Heart left ventricle (tissue), 16 donors: ENCODE measurements at regions of chr11 and their contacts with region 1.

Region 1: GRCh38 chr11:4496557-4497275 is 14.3 kb downstream of the OR52K1 start:
- DNase-seq: no peak
- ATAC-seq: no peak
- H3K4me3 ChIP-seq: no peak overlapping the region
- H3K27ac ChIP-seq: no peak overlapping the region
- H3K4me1 ChIP-seq: peaks cover 0 to 8% (median 0%) of the 10 kb centered on the region in 12 donors
- H3K27me3 ChIP-seq: peaks cover 0 to 18% (median 0%) of the 10 kb centered on the region in 9 donors
- CTCF ChIP-seq: no peak
- POLR2A ChIP-seq: no peak

Region 2: DNA sequence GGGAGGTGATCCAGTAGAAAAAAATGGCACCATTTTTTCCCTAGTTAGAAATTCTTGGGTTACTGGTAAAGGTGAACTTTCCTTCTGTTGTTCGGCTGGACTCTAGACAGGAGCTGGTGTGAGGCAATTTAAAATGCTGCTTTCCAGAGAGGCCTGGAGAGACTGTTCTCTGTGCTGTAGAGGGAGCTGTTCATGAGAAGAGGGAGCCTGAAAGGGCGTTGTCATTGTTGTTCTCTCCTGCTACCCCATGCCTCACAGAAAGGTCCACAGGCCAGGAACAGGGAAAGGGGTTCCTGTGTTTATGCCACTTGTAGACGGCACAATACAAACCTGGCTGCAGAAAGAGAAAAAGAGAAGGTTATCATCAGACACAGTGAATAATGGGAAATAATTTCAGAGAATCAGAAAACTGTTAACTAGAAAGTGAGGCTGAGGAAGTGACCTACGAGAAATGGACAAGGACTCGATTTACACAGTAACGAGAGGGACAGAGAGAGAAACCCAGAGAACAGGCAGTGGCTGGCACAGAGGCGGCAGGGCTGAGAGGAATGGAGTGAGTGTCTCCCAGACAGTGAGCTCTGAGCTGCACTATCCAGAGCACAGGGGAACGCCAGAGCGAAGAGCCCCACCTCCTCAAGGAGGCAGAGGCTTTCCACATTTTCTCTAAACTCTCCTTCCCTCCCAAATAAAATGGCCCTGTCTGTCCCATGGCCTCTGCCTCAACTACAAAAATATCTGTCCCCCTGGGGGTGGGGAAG is 292.9 kb before region 1 on chr11:
- intact Hi-C with region 1: loop called in 2 of 10 experiments (anchors 5 kb)
- DNase-seq: no peak
- ATAC-seq: peak; percentile 83 to 93 (median 90)
- H3K4me3 ChIP-seq: no peak overlapping the region
- H3K27ac ChIP-seq: peak overlapping the region in 7 of 12 donors; percentile 24 to 63 (median 40)
- H3K4me1 ChIP-seq: peaks cover 0 to 18% (median 1%) of the 10 kb centered on the region in 12 donors
- H3K27me3 ChIP-seq: peaks cover 0 to 5% (median 0%) of the 10 kb centered on the region in 9 donors
- CTCF ChIP-seq: peak in 7 of 12 donors; percentile 15 to 39 (median 28)
- POLR2A ChIP-seq: no peak

Region 3: GRCh38 chr11:4393209-4393857 is 103.4 kb before region 1 on chr11 and contains the start of gene TRIM21:
- intact Hi-C with region 1: loop called in 1 of 10 experiments (anchors 10 kb)
- DNase-seq: peak; percentile 81 to 87 (median 84)
- ATAC-seq: peak; percentile 94 to 100 (median 100)
- H3K4me3 ChIP-seq: peak within 1 kb of the TSS; percentile 57 to 99 (median 87)
- H3K27ac ChIP-seq: peak within 1 kb of the TSS in 11 of 12 donors; percentile 69 to 95 (median 83)
- H3K4me1 ChIP-seq: peaks cover 0 to 29% (median 5%) of the 10 kb centered on the region in 12 donors
- H3K27me3 ChIP-seq: peaks cover 0 to 7% (median 0%) of the 10 kb centered on the region in 9 donors
- CTCF ChIP-seq: no peak
- POLR2A ChIP-seq: peak in 1 of 2 donors; percentile 69
- total RNA-seq, gene TRIM21: 7.1 to 36.0 (median 8.5) TPM

Region 4: GRCh38 chr11:4539603-4540219 is 43.0 kb after region 1 on chr11:
- intact Hi-C with region 1: loop called in 1 of 10 experiments (anchors 1 kb)
- DNase-seq: peak in 3 of 5 donors; percentile 22 to 64 (median 22)
- ATAC-seq: peak; percentile 47 to 81 (median 74)
- H3K4me3 ChIP-seq: no peak overlapping the region
- H3K27ac ChIP-seq: no peak overlapping the region
- H3K4me1 ChIP-seq: no peaks in the 10 kb centered on the region
- H3K27me3 ChIP-seq: peaks cover 0 to 8% (median 0%) of the 10 kb centered on the region in 9 donors
- CTCF ChIP-seq: peak; percentile 49 to 80 (median 67)
- POLR2A ChIP-seq: no peak